Cardiac septum (tissue), 1 donor: ENCODE measurements at regions of chr11 and their contacts with region 1.

Region 1: DNA sequence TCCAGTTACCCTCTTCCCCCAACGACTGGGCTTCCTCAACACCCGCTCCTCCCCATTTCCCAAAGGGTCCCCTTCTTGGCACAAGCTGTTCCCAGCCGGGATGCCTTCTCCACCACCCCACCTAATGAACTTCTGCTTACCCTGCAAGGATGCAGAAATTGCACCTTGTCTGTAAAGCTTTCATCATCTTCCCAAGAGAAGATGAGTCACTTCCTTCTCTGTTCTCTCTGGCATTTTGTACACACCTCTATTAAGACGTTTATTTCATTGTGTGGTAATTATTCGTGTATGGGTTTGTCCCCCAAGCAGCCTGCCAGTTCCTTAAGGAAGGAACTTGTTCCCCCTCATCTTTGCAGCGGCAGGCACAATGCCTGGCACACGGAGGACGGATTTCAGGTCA is 351.1 kb downstream of the CADM1 start:
- DNase-seq: no peak

Region 2: DNA sequence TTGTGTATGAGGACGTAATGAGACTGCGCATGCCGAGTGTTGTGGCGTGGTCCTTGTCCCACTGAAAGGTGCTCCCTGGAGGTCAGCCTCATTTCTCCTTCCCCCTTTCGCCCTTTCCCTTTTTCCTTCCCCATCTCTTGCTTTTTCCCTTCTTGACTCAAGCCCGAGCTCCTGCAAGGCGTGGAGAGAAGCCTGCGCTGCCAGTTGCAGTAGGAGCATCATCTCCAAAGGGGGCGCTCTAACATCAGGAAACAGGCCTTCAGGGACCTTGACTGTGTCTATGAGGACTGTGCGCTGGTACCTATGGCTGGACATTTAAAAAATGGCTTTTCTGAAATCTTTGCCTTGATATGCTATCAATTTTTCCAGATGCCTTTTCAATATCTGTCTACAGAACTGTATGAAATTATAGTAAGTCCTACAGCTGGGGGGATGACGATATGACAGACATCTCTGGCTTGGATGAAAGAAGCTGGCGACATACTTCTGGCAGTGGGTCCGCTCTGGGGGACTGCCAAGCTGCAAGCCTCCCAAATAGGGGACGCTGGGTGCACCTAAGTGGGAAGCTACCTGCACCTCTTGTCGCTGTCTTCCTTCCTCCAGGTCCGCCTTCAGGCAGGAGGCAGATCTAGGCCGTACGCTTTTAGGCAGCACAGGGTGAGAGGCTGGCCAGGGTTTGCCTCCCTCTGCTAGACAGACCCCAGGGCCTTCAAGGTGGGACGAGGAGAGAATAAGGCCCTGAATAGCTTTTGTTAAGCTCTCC is 378.4 kb before region 1 on chr11:
- intact Hi-C with region 1: loop called (anchors 10 kb)
- DNase-seq: no peak